H1 (cell line): ENCODE measurements at regions of chr3 and their contacts with region 1.

Region 1: DNA sequence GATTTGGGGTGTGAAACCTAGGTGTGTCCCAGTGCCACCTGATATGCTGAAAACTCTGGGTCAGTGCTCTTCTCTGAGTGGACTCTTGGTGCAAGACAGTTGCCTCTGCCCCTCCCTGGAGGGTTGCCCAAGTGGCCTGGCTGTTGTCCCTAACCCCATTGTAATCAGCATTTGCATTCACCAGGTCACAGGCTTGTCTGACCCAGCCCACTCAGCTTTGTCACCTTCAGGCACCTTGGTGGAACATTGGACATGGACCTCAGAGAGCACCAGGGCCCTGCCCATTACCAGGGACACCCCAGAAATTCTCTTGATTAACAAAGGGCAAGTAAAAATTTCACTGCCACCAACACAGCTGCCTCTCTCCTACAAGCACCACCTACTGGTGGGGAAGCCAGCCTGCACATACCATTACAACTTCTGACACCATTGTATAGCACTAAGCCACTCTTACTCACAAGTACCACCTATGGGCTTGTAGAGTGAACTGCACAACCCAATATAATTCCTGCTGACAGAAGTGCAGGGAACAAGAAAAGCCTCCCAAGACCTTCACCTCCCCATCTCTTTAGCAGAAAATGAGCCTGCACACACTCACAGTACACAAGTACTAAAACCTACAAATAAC is 324.6 kb downstream of the EPHA6 start:
- DNase-seq: peak in 1 of 2 experiments; percentile 7
- H3K4me3 ChIP-seq: no peak overlapping the region
- H3K27ac ChIP-seq: no peak overlapping the region
- H3K4me1 ChIP-seq: no peaks in the 10 kb centered on the region; a peak in 1 of 7 replicates
- H3K27me3 ChIP-seq: no peaks in the 10 kb centered on the region; a peak in 1 of 7 replicates
- CTCF ChIP-seq: peak; percentile 67 to 98 (median 97)
- EP300 ChIP-seq: no peak
- POLR2A ChIP-seq: no peak
- RAD21 ChIP-seq: peak; percentile 77 to 87

Region 2: GRCh38 chr3:97108136-97108535 is 30.9 kb before region 1 on chr3:
- CTCF ChIA-PET with region 1: interaction called, 10 read pairs
- POLR2A ChIA-PET with region 1: no interaction called
- DNase-seq: no peak
- H3K4me3 ChIP-seq: no peak overlapping the region
- H3K27ac ChIP-seq: no peak overlapping the region
- H3K4me1 ChIP-seq: peaks cover 0 to 6% (median 2%) of the 10 kb centered on the region in 4 experiments; a peak in 3 of 7 replicates
- H3K27me3 ChIP-seq: no peaks in the 10 kb centered on the region
- CTCF ChIP-seq: no peak
- EP300 ChIP-seq: no peak
- POLR2A ChIP-seq: no peak
- RAD21 ChIP-seq: no peak